ENCODE measurements at regions of chr10 and their contacts with region 1.

Region 1: GRCh38 chr10:101050208-101051069 is 11.3 kb upstream of the KAZALD1 start:
- DNase-seq: peak; percentile 85
- ATAC-seq: peak; percentile 89
- H3K4me3 Mint-ChIP-seq: peak overlapping the region; percentile 25
- H3K27ac Mint-ChIP-seq: no peak overlapping the region
- H3K4me1 Mint-ChIP-seq: peaks cover 34% of the 10 kb centered on the region
- H3K27me3 Mint-ChIP-seq: peaks cover 48% of the 10 kb centered on the region

Region 2: DNA sequence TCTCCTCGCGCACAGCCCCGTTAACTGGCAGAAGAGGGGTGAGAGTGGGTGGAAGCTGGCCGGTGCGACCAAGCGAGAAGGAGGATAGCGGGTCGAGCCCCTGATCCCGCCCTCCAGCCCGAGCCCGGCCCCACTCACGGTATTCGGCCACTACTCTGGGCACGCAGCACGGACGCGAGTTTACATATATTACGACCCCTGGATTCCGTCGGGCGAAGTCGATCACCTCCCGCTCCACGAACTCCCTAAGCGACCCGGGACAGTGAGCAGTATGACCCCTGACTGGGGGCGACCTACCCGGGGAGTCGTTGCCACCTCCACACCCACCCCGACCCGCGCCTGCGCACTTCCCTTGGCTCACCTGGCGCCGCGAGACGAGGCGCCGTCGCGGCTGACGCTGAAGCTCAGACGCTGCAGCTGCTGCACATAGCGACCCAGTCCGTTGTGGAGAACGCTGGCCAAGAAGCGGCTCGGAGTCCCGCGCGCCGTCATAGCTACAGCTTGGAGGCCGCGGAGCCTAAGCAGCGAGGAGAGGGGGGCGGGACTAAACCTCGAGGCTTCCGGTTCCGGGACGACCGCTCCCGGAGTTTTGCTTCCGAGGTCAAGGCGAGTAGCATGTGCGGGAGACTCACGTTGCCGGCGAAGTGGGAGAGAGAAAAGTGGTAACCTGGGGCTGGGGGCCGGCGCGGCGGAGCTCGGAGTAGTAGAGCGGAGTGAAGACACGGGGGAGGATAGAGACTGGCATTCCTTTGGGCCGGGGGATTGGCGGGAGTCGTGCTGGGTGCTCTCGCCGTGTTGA is 63.3 kb before region 1 on chr10 and contains the starts of genes MRPL43 and TWNK:
- CTCF ChIA-PET with region 1: no interaction called
- POLR2A ChIA-PET with region 1: no interaction called
- DNase-seq: peak; percentile 90
- ATAC-seq: peak; percentile 96
- H3K4me3 Mint-ChIP-seq: peak within 1 kb of the TSS; percentile 88
- H3K27ac Mint-ChIP-seq: peak within 1 kb of the TSS; percentile 79
- H3K4me1 Mint-ChIP-seq: peaks cover 44% of the 10 kb centered on the region
- H3K27me3 Mint-ChIP-seq: no peaks in the 10 kb centered on the region
- total RNA-seq, gene MRPL43: 46.1 to 48.9 TPM
- total RNA-seq, gene TWNK: 11.8 to 13.3 TPM

Region 3: DNA sequence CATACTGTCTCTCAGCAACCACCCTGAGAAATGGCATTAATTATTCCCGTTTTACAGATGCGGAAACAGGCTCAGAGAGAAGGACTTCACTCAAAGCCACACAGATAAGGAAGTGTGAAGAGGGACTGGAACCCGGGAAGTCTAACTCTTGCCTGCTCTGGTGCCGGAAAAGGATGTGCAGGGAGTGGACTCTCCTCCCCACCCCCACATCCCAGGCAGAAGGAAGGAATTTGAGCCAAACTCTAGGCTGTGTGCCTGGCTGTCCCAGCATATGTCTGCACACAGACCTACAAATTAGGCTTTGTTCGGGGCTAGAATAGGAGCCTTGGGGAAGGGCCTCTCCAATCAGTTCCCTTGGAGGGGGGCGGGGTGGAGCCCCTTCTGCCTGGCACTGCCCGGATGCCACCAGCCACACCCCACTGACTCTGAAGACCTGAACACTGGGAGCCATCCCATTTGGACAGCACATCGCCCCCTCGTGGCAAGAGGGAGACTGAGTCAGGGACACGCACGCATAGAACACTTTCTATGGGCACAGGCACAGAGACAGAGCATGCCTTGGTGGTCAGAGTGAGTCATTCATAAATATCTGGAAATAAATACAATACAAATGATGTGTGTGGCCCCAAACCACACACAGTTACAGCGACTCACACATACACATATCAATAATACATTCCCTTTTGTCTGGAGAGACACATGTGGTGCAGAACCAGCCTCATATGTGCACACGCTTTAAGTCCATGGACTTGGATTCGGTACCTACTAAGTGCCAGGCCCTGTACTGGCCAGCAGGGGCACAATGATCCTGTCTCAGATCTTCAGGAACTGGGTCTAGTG is 37.7 kb before region 1 on chr10:
- CTCF ChIA-PET with region 1: interaction called, 22 read pairs
- POLR2A ChIA-PET with region 1: no interaction called
- DNase-seq: peak; percentile 88
- ATAC-seq: peak; percentile 94
- H3K4me3 Mint-ChIP-seq: no peak overlapping the region
- H3K27ac Mint-ChIP-seq: no peak overlapping the region
- H3K4me1 Mint-ChIP-seq: peaks cover 16% of the 10 kb centered on the region
- H3K27me3 Mint-ChIP-seq: peaks cover 31% of the 10 kb centered on the region

Region 4: DNA sequence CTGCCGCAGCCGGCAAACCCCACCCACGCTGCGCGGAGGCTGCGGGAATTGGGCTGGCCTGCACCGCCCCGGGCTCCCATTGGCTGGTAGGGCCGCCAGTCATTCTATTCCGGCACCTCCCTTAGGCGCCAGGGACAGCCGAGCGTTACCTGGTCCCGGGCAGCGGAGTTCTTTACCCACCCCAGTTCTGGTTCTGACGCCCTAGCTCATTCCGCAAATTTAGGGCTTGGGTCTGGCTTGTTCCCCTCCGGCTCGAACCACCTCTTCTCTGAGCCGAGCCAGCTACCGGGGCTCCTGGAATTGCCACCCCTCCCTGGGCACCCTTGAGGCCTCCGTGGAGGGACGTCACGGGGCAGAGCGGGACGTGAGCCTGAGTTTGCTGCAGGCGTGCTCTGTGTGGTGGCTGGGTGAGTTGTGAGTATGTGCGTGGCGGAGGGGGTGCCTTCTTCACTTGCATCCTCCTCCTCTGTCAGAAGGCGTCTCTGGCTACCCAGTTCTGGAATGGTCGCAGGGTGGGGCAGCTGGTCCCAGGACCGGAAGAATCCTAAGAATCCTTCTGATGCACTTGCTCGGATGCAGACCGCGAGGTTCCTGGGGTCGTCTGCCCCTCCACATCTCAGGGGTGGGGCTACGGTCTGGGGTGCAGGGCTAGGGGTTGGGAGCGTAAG is 19.2 kb before region 1 on chr10 and contains the starts of genes PDZD7 and SFXN3:
- CTCF ChIA-PET with region 1: interaction called, 32 read pairs
- POLR2A ChIA-PET with region 1: no interaction called
- DNase-seq: peak; percentile 97
- ATAC-seq: peak; percentile 90
- H3K4me3 Mint-ChIP-seq: peak within 1 kb of the TSS; percentile 79
- H3K27ac Mint-ChIP-seq: peak within 1 kb of the TSS; percentile 90
- H3K4me1 Mint-ChIP-seq: peaks cover 20% of the 10 kb centered on the region
- H3K27me3 Mint-ChIP-seq: peaks cover 17% of the 10 kb centered on the region
- total RNA-seq, gene PDZD7: 0.47 to 0.50 TPM
- total RNA-seq, gene SFXN3: 24.7 to 24.8 TPM

Region 5: GRCh38 chr10:101075775-101076174 is 25.3 kb after region 1 on chr10:
- CTCF ChIA-PET with region 1: interaction called, 221 read pairs
- POLR2A ChIA-PET with region 1: no interaction called
- DNase-seq: no peak
- ATAC-seq: peak; percentile 47
- H3K4me3 Mint-ChIP-seq: no peak overlapping the region
- H3K27ac Mint-ChIP-seq: no peak overlapping the region
- H3K4me1 Mint-ChIP-seq: no peaks in the 10 kb centered on the region
- H3K27me3 Mint-ChIP-seq: peaks cover 55% of the 10 kb centered on the region

Region 6: GRCh38 chr10:101095542-101096213 is 45.2 kb after region 1 on chr10:
- CTCF ChIA-PET with region 1: interaction called, 10 read pairs
- POLR2A ChIA-PET with region 1: no interaction called
- DNase-seq: peak; percentile 79
- ATAC-seq: peak; percentile 90
- H3K4me3 Mint-ChIP-seq: no peak overlapping the region
- H3K27ac Mint-ChIP-seq: no peak overlapping the region
- H3K4me1 Mint-ChIP-seq: no peaks in the 10 kb centered on the region
- H3K27me3 Mint-ChIP-seq: peaks cover 34% of the 10 kb centered on the region

Region 7: DNA sequence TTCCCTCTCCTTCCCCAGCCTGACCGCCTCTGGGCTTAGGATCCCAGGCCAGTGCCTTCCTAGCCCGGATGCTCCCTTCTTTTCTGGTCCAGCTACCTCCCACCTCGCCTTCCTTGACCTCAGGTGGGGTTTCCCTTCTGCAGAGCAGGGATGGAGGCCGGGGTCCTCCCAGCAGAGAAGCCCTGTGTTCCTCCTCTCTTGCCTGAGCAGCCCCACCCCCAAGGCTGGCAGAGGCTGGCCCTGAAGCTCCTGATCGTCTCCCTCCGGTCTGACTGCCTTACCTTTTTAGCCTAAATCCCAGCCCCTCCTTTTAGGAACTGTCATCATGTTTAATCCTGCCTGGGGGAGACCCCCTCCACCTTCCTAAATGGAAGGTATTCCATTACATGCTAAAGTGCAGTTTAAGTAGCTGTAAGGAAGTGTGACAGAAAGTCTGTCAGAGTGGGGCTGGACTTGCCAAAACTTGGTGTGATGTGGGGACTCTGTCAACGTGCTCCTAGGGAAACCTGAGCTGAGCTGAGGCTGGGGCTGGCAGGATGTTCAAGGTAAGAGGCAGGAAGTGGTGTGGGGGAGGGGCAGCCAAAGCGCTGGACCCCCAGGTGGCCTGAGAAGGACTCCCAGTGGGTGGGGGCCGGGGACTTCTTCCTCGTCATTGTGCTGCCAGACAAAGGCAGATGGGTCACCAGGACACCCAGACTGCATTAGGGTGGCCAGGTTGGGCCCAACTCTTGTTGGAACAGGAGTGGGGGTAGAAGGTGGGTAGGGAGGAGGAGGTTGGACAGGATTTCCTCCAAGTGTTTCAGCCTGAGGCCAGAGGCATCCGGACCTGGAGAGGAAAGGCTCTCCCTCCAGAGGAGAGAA is 139.3 kb after region 1 on chr10:
- CTCF ChIA-PET with region 1: no interaction called
- POLR2A ChIA-PET with region 1: no interaction called
- DNase-seq: no peak
- ATAC-seq: no peak
- H3K4me3 Mint-ChIP-seq: no peak overlapping the region
- H3K27ac Mint-ChIP-seq: no peak overlapping the region
- H3K4me1 Mint-ChIP-seq: peaks cover 6% of the 10 kb centered on the region
- H3K27me3 Mint-ChIP-seq: peaks cover 7% of the 10 kb centered on the region

Measured in activated CD8-positive, alpha-beta T cell treated with anti-CD3 and anti-CD28 coated beads, Interleukin-2, amount 10 ng/mL, durations not matched to agents 7 days and 5 days (primary cell).